Heart left ventricle (tissue), 16 donors: ENCODE measurements at regions of chr9 and their contacts with region 1.

Region 1: DNA sequence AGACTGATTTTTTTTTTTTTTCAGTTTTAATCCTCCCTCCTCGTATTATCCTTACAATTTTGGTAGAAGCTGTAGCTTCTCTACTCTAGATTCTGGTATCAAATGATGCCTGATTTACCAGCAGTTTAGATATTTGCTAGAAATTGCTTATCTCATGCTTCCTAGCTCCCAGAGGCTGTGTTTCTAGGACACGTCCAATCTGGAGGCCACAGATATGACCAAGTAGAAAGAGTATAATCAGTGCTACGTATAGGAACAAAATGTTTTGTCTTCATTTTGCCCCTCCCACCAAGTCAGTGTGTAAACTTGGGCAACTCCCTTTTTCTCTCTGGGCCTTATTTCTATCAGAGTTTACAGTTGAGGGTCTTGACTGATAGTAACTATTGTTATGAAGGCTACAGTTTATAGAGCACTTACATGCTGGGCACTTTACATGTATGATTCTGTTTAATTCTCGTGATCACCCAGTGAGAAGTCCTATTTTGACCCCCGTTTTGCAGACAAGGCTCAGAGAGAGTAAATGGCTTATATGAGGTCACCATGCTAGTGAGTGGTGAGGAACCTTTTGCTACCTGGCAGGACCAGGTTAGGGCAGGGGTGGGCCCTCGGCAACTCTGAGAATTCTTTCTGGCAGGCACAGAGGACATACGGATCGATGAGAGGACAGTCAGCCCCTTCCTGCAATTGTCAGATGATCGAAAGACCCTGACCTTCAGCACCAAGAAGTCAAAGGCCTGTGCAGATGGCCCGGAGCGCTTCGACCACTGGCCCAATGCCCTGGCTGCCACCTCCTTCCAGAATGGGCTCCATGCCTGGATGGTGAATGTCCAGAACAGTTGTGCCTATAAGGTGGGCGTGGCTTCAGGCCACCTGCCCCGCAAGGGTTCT is 7.6 kb downstream of the HDHD3 start:
- DNase-seq: peak in 1 of 5 donors; percentile 41
- ATAC-seq: peak in 3 of 4 donors; percentile 48 to 60 (median 55)
- H3K4me3 ChIP-seq: no peak overlapping the region
- H3K27ac ChIP-seq: no peak overlapping the region
- H3K4me1 ChIP-seq: peaks cover 0 to 13% (median 0%) of the 10 kb centered on the region in 12 donors
- H3K27me3 ChIP-seq: no peaks in the 10 kb centered on the region
- CTCF ChIP-seq: no peak
- POLR2A ChIP-seq: no peak

Region 2: DNA sequence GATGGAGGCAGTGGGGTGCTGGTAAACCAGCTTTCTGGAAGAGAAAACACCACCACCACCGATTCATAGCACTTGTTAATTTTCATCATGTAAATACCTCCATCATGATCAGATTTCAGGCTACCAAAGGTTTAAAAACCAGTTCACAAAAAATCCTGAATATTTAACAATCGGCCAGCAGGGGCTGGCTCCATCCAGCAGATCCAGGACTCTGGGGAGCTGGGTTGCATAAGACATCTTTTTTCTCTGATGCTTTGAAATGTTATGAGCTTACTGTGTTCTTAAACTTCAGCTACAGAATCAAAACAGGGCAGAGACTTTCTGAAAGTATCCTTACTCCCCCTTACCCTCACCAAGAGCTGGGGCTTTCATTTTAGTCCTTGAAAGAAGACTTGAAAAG is 51.4 kb before region 1 on chr9:
- intact Hi-C with region 1: loop called in 1 of 10 experiments (anchors 5 kb)
- DNase-seq: no peak
- ATAC-seq: no peak
- H3K4me3 ChIP-seq: no peak overlapping the region
- H3K27ac ChIP-seq: no peak overlapping the region
- H3K4me1 ChIP-seq: peaks cover 0 to 3% (median 0%) of the 10 kb centered on the region in 12 donors
- H3K27me3 ChIP-seq: no peaks in the 10 kb centered on the region
- CTCF ChIP-seq: peak in 3 of 12 donors; percentile 8 to 24 (median 13)
- POLR2A ChIP-seq: no peak